AG04450 (cell line): ENCODE measurements at regions of chr3 and their contacts with region 1.

Region 1: GRCh38 chr3:69691860-69692259 is 47.4 kb upstream of the MITF start:
- DNase-seq: no peak
- H3K4me3 ChIP-seq: no peak overlapping the region
- H3K27ac ChIP-seq: no peak overlapping the region
- H3K27me3 ChIP-seq: no peaks in the 10 kb centered on the region
- CTCF ChIP-seq: no peak

Region 2: GRCh38 chr3:69806735-69807438 is 115.0 kb after region 1 on chr3:
- CTCF ChIA-PET with region 1: interaction called, 10 read pairs
- POLR2A ChIA-PET with region 1: no interaction called
- DNase-seq: no peak
- H3K4me3 ChIP-seq: no peak overlapping the region
- H3K27ac ChIP-seq: peak overlapping the region; percentile 86
- H3K27me3 ChIP-seq: no peaks in the 10 kb centered on the region
- CTCF ChIP-seq: no peak

Region 3: DNA sequence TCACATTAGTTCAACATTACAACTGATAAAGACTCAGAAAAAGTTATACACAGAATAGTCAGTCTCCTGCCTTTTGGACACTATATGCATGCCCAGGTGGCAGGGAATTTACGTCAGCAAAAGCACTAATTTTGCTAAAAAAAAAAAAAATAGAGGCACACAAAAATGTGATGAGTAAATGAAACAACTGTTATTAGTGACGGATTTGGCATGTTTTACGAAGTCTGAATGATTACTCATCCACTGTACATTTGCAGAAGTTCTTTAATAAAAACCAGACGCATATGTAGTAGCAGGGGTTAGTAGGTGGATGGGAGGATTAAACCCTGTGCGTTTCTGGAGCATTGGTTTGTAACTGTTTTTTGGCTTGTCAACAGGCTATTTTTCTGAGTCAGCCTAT is 146.4 kb after region 1 on chr3:
- CTCF ChIA-PET with region 1: interaction called, 4 read pairs
- POLR2A ChIA-PET with region 1: interaction called, 10 read pairs
- DNase-seq: peak; percentile 94
- H3K4me3 ChIP-seq: peak overlapping the region; percentile 46; the same call in 1 of the 2 replicates
- H3K27ac ChIP-seq: peak overlapping the region; percentile 75
- H3K27me3 ChIP-seq: no peaks in the 10 kb centered on the region
- CTCF ChIP-seq: no peak

Region 4: GRCh38 chr3:69865920-69866679 is 174.2 kb after region 1 on chr3:
- CTCF ChIA-PET with region 1: interaction called, 29 read pairs
- POLR2A ChIA-PET with region 1: no interaction called
- DNase-seq: no peak
- H3K4me3 ChIP-seq: peak overlapping the region; percentile 33
- H3K27ac ChIP-seq: peak overlapping the region; percentile 77
- H3K27me3 ChIP-seq: no peaks in the 10 kb centered on the region
- CTCF ChIP-seq: no peak

Region 5: GRCh38 chr3:69948246-69948862 is 256.5 kb after region 1 on chr3:
- CTCF ChIA-PET with region 1: interaction called, 43 read pairs
- POLR2A ChIA-PET with region 1: interaction called, 7 read pairs
- DNase-seq: peak; percentile 38
- H3K4me3 ChIP-seq: no peak overlapping the region
- H3K27ac ChIP-seq: no peak overlapping the region
- H3K27me3 ChIP-seq: no peaks in the 10 kb centered on the region
- CTCF ChIP-seq: peak; percentile 63